CD8-positive, alpha-beta memory T cell (primary cell): ENCODE measurements at regions of chr11 and their contacts with region 1.

Region 1: DNA sequence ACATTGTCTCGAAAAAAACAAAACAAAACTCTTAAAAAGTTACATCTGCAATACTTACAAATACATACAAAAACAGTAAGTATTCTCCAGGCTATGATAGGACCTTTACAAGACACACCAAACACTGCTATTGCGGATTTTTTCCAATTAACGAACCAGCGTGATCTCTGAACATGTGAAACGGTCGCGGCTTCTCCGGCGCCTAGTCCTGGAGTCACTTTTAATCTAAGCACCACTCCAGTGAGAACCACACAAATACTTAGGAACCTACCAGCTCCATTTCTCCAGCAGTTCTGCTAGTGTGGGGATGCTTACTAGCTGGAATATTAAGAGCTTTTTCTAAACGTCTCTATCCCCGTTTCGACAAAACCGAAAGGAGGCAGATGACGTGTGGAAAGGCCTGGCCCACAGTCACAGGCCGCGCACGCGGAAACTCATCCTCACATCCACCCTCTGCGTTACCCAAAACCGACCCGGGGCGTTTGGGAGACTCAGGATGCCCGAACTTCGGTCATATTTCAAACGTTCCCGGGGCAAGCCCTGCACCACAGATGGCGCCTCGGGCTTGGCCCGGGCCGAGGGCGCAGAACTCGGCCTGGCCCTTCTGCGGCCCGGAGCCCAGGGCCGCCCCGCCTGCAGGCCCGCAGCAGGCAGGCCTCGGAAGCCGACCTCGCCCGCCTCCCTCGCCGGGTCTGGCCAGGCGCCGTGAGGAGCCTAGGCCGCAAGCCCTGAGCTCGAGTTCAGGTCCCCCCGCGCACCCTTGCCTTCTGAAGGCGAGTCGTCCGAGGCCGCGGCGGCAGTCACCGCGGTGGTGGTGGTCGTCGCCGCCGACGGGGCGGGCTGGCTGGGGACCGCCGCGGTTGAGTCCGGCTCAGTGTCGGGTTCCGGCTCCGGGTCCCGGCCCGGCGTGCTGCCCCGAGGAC is 575 bp downstream of the FNBP4 start:
- DNase-seq: peak; percentile 63 to 85 (median 77)
- H3K4me3 ChIP-seq: peak overlapping the region; percentile 89
- H3K4me3 Mint-ChIP-seq: peak overlapping the region; percentile 96 to 99 (median 97)
- H3K27ac ChIP-seq: peak overlapping the region; percentile 96
- H3K27ac Mint-ChIP-seq: peak overlapping the region; percentile 93 to 100 (median 99)
- H3K4me1 ChIP-seq: peaks cover 30% of the 10 kb centered on the region
- H3K4me1 Mint-ChIP-seq: peaks cover 31 to 47% (median 32%) of the 10 kb centered on the region in 3 donors
- H3K27me3 ChIP-seq: no peaks in the 10 kb centered on the region
- H3K27me3 Mint-ChIP-seq: peaks cover 0 to 3% of the 10 kb centered on the region in 2 donors

Region 2: GRCh38 chr11:47611348-47611794 is 155.2 kb before region 1 on chr11:
- CTCF ChIA-PET with region 1: no interaction called
- POLR2A ChIA-PET with region 1: interaction called, 10 read pairs
- DNase-seq: no peak
- H3K4me3 ChIP-seq: no peak overlapping the region
- H3K4me3 Mint-ChIP-seq: no peak overlapping the region
- H3K27ac ChIP-seq: no peak overlapping the region
- H3K27ac Mint-ChIP-seq: no peak overlapping the region
- H3K4me1 ChIP-seq: no peaks in the 10 kb centered on the region
- H3K4me1 Mint-ChIP-seq: peaks cover 0 to 3% (median 0%) of the 10 kb centered on the region in 3 donors
- H3K27me3 ChIP-seq: no peaks in the 10 kb centered on the region
- H3K27me3 Mint-ChIP-seq: no peaks in the 10 kb centered on the region

Region 3: GRCh38 chr11:47715082-47715669 is 51.4 kb before region 1 on chr11 and contains the start of gene AGBL2:
- CTCF ChIA-PET with region 1: no interaction called
- POLR2A ChIA-PET with region 1: interaction called, 24 read pairs
- DNase-seq: peak; percentile 79 to 90 (median 81)
- H3K4me3 ChIP-seq: peak within 1 kb of the TSS; percentile 99
- H3K4me3 Mint-ChIP-seq: peak within 1 kb of the TSS; percentile 95 to 100 (median 98)
- H3K27ac ChIP-seq: peak within 1 kb of the TSS; percentile 90
- H3K27ac Mint-ChIP-seq: peak within 1 kb of the TSS; percentile 96 to 100 (median 98)
- H3K4me1 ChIP-seq: peaks cover 15% of the 10 kb centered on the region
- H3K4me1 Mint-ChIP-seq: peaks cover 17 to 26% (median 24%) of the 10 kb centered on the region in 3 donors
- H3K27me3 ChIP-seq: no peaks in the 10 kb centered on the region
- H3K27me3 Mint-ChIP-seq: no peaks in the 10 kb centered on the region
- total RNA-seq, gene AGBL2: 2.6 to 2.9 TPM

Region 4: DNA sequence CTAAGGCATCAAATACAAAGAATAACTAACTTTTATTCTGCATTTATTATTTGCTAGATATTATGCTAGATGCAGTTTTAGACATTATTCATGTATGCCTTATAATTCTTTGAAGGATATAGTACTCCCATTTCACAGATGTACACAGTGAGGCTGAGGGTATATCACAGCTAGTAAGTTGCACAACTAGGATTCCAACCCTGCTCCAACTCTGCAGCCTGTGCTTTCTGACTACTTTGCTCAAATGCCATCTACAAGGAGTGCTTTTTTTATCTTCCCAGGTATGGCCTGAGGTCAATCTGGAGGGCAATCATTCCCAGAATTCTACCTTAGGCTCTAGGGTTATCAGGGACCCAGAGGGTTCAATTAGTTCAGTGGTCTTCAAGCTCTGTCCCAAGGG is 53.2 kb after region 1 on chr11:
- CTCF ChIA-PET with region 1: no interaction called
- POLR2A ChIA-PET with region 1: no interaction called
- DNase-seq: no peak
- H3K4me3 ChIP-seq: no peak overlapping the region
- H3K4me3 Mint-ChIP-seq: no peak overlapping the region
- H3K27ac ChIP-seq: no peak overlapping the region
- H3K27ac Mint-ChIP-seq: peak overlapping the region in 1 of 8 donors; percentile 17
- H3K4me1 ChIP-seq: no peaks in the 10 kb centered on the region
- H3K4me1 Mint-ChIP-seq: no peaks in the 10 kb centered on the region
- H3K27me3 ChIP-seq: no peaks in the 10 kb centered on the region
- H3K27me3 Mint-ChIP-seq: no peaks in the 10 kb centered on the region